Naive thymus-derived CD4-positive, alpha-beta T cell (primary cell): ENCODE measurements at regions of chr1 and their contacts with region 1.

Region 1: DNA sequence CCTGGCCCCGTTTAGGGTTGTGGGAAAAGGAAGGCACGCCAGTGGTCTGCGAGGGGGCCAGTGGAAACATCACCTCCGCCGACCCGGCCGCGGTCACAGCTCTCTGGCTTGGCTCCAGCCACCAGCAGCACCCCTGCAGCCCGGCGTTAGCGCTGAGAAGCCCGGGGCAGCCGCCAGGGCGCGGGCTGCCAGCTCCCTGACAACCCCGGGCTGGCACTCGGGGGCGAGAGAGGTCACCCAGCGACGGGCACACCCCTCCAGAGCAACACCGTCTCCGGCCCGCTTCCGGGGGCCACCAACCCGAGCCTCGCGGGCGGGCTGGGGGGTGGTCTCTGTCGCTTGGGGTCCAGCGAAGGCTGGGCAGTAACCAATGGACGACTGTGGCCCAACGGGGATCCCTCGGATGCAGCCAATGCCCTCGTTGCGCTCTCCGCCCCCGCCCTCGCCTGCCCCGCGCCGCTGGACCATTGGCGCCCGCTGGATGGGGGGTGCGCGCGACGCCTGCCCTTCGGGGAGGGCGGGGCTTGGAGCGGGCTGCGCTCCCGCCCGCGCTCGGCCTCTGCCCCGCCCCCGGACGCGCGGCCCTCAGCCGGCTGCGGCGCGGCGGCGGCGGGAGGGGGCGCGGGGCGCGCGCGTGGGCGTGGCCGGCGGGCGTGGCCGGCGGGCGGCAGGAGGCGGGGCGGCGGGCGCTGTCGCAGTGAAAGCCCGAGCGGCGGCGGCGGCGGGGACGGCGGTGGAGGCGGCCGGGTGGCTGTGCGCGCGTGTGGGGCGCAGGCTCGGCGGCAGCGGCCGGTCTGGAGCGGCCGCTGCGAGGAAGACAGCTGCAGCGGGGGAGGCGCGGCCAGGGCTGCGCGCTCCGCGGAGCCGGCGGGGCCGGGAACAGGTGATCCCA is at the start of gene MAN1C1:
- DNase-seq: peak; percentile 71 to 89 (median 85)
- ATAC-seq: peak; percentile 91
- H3K4me3 ChIP-seq: peak within 1 kb of the TSS; percentile 76
- H3K4me3 Mint-ChIP-seq: peak within 1 kb of the TSS; percentile 78 to 99 (median 86)
- H3K27ac ChIP-seq: peak within 1 kb of the TSS; percentile 84
- H3K27ac Mint-ChIP-seq: peak within 1 kb of the TSS; percentile 67 to 93 (median 86)
- H3K4me1 ChIP-seq: peaks cover 13 to 37% of the 10 kb centered on the region in 2 donors
- H3K4me1 Mint-ChIP-seq: peaks cover 36 to 52% (median 45%) of the 10 kb centered on the region in 7 donors
- H3K27me3 ChIP-seq: no peaks in the 10 kb centered on the region
- H3K27me3 Mint-ChIP-seq: peaks cover 0 to 72% (median 0%) of the 10 kb centered on the region in 5 donors
- total RNA-seq, gene MAN1C1: 28.8 to 85.5 (median 69.9) TPM

Region 2: DNA sequence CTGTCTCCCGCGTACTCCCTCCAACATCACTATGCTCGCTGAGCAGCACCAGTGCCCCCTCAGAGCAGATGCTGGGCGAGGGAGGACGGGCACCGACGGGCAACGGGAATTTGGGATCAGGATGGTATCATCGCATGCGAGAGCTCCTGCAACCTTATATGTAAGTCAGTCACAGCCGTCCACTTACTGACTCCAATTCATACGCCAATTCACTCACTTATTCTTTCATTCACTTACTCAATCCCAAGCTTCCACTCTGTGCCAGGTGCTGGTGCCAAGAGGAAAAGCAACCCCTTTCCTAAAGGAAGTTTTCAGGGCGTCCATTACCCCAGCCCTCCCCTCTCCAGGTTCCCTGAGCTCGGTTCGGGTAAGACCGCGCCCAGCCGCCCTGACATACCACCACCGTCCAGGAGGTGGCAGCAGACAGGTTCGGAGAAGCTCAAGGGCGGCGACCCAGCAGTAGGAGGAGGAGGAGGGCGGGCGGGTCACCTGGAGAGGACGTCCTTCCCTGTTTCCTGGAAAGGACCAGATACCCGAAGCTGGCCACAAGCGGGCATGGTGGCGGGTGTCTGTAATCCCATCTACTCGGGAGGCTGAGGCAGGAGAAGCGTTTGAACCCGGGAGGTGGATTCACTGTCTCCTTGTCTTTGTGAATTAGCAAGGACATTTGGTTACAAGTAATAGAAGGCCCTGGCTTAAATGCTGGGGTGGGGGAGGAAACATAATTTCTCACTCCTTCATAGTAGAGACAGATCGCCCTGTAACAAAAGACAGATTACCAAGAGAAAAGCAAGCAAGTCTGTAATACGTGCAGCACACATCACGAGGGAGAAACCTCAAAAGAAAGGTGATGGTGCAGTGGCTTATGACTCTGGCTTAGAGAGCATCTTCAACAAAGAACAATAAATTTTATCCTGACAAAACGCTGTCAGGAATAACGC is 1465.8 kb before region 1 on chr1:
- CTCF ChIA-PET with region 1: no interaction called
- POLR2A ChIA-PET with region 1: no interaction called
- intact Hi-C with region 1: no loop called
- DNase-seq: peak; percentile 56 to 89 (median 77)
- ATAC-seq: peak; percentile 96
- H3K4me3 ChIP-seq: peak overlapping the region; percentile 34
- H3K4me3 Mint-ChIP-seq: peak overlapping the region; percentile 32 to 82 (median 71)
- H3K27ac ChIP-seq: no peak overlapping the region
- H3K27ac Mint-ChIP-seq: peak overlapping the region in 2 of 9 donors; percentile 54 to 61
- H3K4me1 ChIP-seq: peaks cover 4 to 10% of the 10 kb centered on the region in 2 donors
- H3K4me1 Mint-ChIP-seq: peaks cover 9 to 18% (median 14%) of the 10 kb centered on the region in 7 donors
- H3K27me3 ChIP-seq: no peaks in the 10 kb centered on the region
- H3K27me3 Mint-ChIP-seq: peaks cover 27 to 51% (median 39%) of the 10 kb centered on the region in 5 donors

Region 3: DNA sequence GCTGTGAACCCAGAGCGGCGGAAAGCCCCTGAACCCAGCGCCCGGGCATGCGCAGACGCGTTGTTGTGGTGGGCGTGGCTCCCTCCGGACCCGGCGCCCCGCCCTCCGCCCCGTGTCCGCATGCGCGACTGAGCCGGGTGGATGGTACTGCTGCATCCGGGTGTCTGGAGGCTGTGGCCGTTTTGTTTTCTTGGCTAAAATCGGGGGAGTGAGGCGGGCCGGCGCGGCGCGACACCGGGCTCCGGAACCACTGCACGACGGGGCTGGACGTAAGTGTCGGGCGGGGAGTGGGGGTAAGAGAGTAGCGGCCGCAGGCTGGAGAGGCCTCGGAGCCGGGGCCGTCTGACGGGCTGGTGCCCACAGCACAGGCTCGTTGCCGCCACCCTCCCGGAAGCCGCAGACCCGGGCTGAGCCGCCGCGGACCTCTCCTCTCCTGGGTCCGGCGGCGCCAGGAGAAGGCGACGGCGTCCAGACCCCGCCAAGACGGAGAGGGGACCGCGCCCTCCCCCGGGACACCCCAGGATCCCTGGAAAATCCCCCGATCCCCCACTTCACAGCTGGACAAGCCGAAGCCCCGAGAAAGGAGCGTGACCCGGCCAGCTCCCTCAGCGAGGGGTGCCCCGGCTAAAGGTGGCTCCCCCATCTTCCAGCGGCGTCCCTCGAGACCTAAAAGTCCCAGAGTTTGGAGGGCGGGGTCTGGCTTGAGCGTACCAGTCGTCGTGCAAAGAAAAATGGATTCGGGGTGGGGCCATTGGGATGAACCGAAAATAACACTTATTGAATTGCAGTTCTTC is 278.0 kb before region 1 on chr1 and contains the start of gene TMEM50A:
- CTCF ChIA-PET with region 1: no interaction called
- POLR2A ChIA-PET with region 1: no interaction called
- intact Hi-C with region 1: no loop called
- DNase-seq: peak; percentile 87 to 99 (median 92)
- ATAC-seq: peak; percentile 90
- H3K4me3 ChIP-seq: peak within 1 kb of the TSS; percentile 94
- H3K4me3 Mint-ChIP-seq: peak within 1 kb of the TSS; percentile 93 to 97 (median 94)
- H3K27ac ChIP-seq: peak within 1 kb of the TSS; percentile 97
- H3K27ac Mint-ChIP-seq: peak within 1 kb of the TSS; percentile 80 to 96 (median 94)
- H3K4me1 ChIP-seq: peaks cover 20 to 22% of the 10 kb centered on the region in 2 donors
- H3K4me1 Mint-ChIP-seq: peaks cover 26 to 58% (median 45%) of the 10 kb centered on the region in 7 donors
- H3K27me3 ChIP-seq: no peaks in the 10 kb centered on the region
- H3K27me3 Mint-ChIP-seq: no peaks in the 10 kb centered on the region
- total RNA-seq, gene TMEM50A: 61.6 to 149 (median 79.0) TPM

Region 4: GRCh38 chr1:25430666-25431505 is 185.5 kb before region 1 on chr1 and contains the start of gene MACO1:
- CTCF ChIA-PET with region 1: no interaction called
- POLR2A ChIA-PET with region 1: interaction called, 3 read pairs
- intact Hi-C with region 1: loop called in 1 of 2 experiments (anchors 5 kb)
- DNase-seq: peak; percentile 93 to 99 (median 98)
- ATAC-seq: peak; percentile 91
- H3K4me3 ChIP-seq: peak within 1 kb of the TSS; percentile 100
- H3K4me3 Mint-ChIP-seq: peak within 1 kb of the TSS; percentile 93 to 99 (median 98)
- H3K27ac ChIP-seq: peak within 1 kb of the TSS; percentile 96
- H3K27ac Mint-ChIP-seq: peak within 1 kb of the TSS; percentile 96 to 100 (median 100)
- H3K4me1 ChIP-seq: peaks cover 30 to 33% of the 10 kb centered on the region in 2 donors
- H3K4me1 Mint-ChIP-seq: peaks cover 32 to 55% (median 48%) of the 10 kb centered on the region in 7 donors
- H3K27me3 ChIP-seq: no peaks in the 10 kb centered on the region
- H3K27me3 Mint-ChIP-seq: peaks cover 0 to 3% (median 0%) of the 10 kb centered on the region in 5 donors
- total RNA-seq, gene MACO1: 16.7 to 25.9 (median 22.0) TPM

Region 5: DNA sequence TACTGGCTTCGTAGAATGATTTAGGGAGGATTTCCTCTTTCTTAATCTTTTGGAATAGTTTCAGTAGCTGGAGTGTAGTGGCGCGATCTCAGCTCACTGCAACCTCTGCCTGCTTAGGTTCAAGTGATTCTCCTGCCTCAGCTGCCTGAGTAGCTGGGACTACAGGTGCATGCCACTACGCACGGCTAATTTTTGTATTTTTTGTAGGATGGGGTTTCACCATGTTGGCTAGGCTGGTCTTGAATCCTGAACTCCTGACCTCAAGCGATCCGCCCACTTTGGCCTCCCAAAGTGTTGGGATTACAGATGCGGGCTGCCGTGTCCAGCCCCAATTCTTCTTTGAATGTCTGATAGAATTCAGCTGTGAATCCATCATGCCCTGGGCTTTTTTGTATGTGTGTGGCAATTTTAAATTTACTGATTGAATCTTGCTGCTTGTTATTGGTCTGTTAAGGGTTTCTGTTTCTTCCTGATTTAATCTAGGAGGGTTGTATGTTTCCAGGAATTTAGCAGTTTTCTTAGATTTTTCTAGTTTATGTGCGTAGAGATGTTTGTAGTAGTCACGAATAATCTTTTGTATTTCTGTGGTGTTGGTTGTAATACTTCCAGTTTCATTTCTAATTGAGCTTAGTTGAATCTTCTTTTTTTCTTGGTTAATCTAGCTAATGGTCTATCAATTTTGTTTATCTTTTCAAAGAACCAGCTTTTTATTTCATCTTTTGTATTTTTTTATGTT is 15.6 kb after region 1 on chr1:
- CTCF ChIA-PET with region 1: interaction called, 17 read pairs
- POLR2A ChIA-PET with region 1: interaction called, 18 read pairs
- intact Hi-C with region 1: loop called (anchors 1 kb)
- DNase-seq: peak in 4 of 9 donors; percentile 3 to 35 (median 25)
- ATAC-seq: peak; percentile 44
- H3K4me3 ChIP-seq: peak overlapping the region; percentile 51
- H3K4me3 Mint-ChIP-seq: peak overlapping the region; percentile 63 to 96 (median 84)
- H3K27ac ChIP-seq: peak overlapping the region; percentile 86
- H3K27ac Mint-ChIP-seq: peak overlapping the region; percentile 79 to 100 (median 97)
- H3K4me1 ChIP-seq: peaks cover 6 to 48% of the 10 kb centered on the region in 2 donors
- H3K4me1 Mint-ChIP-seq: peaks cover 55 to 91% (median 82%) of the 10 kb centered on the region in 7 donors
- H3K27me3 ChIP-seq: no peaks in the 10 kb centered on the region
- H3K27me3 Mint-ChIP-seq: peaks cover 0 to 44% (median 0%) of the 10 kb centered on the region in 5 donors

Region 6: GRCh38 chr1:25664357-25665199 is 48.2 kb after region 1 on chr1:
- CTCF ChIA-PET with region 1: interaction called, 4 read pairs
- POLR2A ChIA-PET with region 1: interaction called, 81 read pairs
- intact Hi-C with region 1: no loop called
- DNase-seq: no peak
- ATAC-seq: no peak
- H3K4me3 ChIP-seq: no peak overlapping the region
- H3K4me3 Mint-ChIP-seq: no peak overlapping the region
- H3K27ac ChIP-seq: peak overlapping the region; percentile 39
- H3K27ac Mint-ChIP-seq: peak overlapping the region in 8 of 9 donors; percentile 43 to 98 (median 96)
- H3K4me1 ChIP-seq: peaks cover 0 to 41% of the 10 kb centered on the region in 2 donors
- H3K4me1 Mint-ChIP-seq: peaks cover 23 to 89% (median 85%) of the 10 kb centered on the region in 7 donors
- H3K27me3 ChIP-seq: no peaks in the 10 kb centered on the region
- H3K27me3 Mint-ChIP-seq: peaks cover 0 to 69% (median 0%) of the 10 kb centered on the region in 5 donors

Region 7: GRCh38 chr1:25695090-25695770 is 78.9 kb after region 1 on chr1:
- CTCF ChIA-PET with region 1: interaction called, 19 read pairs
- POLR2A ChIA-PET with region 1: interaction called, 12 read pairs
- intact Hi-C with region 1: loop called in 1 of 2 experiments (anchors 1 kb)
- DNase-seq: no peak
- ATAC-seq: no peak
- H3K4me3 ChIP-seq: no peak overlapping the region
- H3K4me3 Mint-ChIP-seq: peak overlapping the region in 6 of 10 donors; percentile 1 to 69 (median 38)
- H3K27ac ChIP-seq: no peak overlapping the region
- H3K27ac Mint-ChIP-seq: peak overlapping the region in 8 of 9 donors; percentile 65 to 89 (median 74)
- H3K4me1 ChIP-seq: peaks cover 0 to 63% of the 10 kb centered on the region in 2 donors
- H3K4me1 Mint-ChIP-seq: peaks cover 29 to 88% (median 70%) of the 10 kb centered on the region in 7 donors
- H3K27me3 ChIP-seq: no peaks in the 10 kb centered on the region
- H3K27me3 Mint-ChIP-seq: peaks cover 0 to 53% (median 0%) of the 10 kb centered on the region in 5 donors

Region 8: DNA sequence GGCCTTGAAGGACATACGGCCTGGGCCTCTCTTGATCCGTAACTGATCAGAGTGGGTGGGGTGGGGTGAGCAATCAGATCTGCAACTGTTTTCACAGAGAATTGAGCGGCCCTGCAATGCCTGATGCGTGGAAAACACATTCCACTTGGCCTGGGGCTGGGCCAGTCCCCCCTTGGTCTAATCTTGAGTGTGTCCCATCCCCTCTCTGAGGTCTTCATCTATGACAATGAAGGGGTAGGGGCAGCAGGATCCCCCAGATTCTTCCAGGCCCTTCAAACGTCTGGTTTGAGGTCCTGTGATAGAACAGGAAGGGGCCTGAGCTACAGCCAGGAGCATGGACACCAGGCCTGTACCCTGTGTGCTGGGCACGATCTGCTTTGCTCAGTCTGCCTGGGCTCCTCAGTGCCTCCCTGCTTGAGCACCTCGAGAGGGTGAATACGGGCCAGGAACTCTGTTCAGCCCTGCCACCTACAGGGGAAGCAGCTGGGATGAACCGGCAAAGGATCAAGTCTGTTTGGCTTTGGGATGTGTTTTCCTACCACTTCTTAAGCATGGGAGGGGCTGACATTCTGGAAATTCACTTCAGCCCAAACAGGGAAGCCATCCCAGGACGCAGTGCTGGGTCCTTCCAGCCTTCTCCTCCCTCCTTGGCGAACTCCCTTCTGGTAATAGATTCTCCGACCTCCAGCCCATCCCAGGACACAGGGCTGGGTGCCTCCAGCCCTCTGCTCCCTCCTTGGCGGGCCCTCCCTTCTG is 127.7 kb after region 1 on chr1:
- CTCF ChIA-PET with region 1: no interaction called
- POLR2A ChIA-PET with region 1: no interaction called
- intact Hi-C with region 1: no loop called
- DNase-seq: no peak
- ATAC-seq: no peak
- H3K4me3 ChIP-seq: no peak overlapping the region
- H3K4me3 Mint-ChIP-seq: no peak overlapping the region
- H3K27ac ChIP-seq: peak overlapping the region; percentile 30
- H3K27ac Mint-ChIP-seq: peak overlapping the region in 8 of 9 donors; percentile 30 to 90 (median 76)
- H3K4me1 ChIP-seq: peaks cover 0 to 16% of the 10 kb centered on the region in 2 donors
- H3K4me1 Mint-ChIP-seq: peaks cover 0 to 71% (median 57%) of the 10 kb centered on the region in 7 donors
- H3K27me3 ChIP-seq: no peaks in the 10 kb centered on the region
- H3K27me3 Mint-ChIP-seq: peaks cover 0 to 24% (median 0%) of the 10 kb centered on the region in 5 donors

Region 9: GRCh38 chr1:25796811-25797458 is 180.6 kb after region 1 on chr1:
- CTCF ChIA-PET with region 1: interaction called, 32 read pairs
- POLR2A ChIA-PET with region 1: interaction called, 31 read pairs
- intact Hi-C with region 1: loop called (anchors 1 to 2 kb)
- DNase-seq: peak; percentile 71 to 89 (median 86)
- ATAC-seq: peak; percentile 76
- H3K4me3 ChIP-seq: peak overlapping the region; percentile 15
- H3K4me3 Mint-ChIP-seq: peak overlapping the region; percentile 58 to 94 (median 81)
- H3K27ac ChIP-seq: peak overlapping the region; percentile 37
- H3K27ac Mint-ChIP-seq: peak overlapping the region; percentile 51 to 98 (median 93)
- H3K4me1 ChIP-seq: peaks cover 32 to 67% of the 10 kb centered on the region in 2 donors
- H3K4me1 Mint-ChIP-seq: peaks cover 30 to 88% (median 74%) of the 10 kb centered on the region in 7 donors
- H3K27me3 ChIP-seq: no peaks in the 10 kb centered on the region
- H3K27me3 Mint-ChIP-seq: peaks cover 0 to 29% (median 0%) of the 10 kb centered on the region in 5 donors

Region 10: DNA sequence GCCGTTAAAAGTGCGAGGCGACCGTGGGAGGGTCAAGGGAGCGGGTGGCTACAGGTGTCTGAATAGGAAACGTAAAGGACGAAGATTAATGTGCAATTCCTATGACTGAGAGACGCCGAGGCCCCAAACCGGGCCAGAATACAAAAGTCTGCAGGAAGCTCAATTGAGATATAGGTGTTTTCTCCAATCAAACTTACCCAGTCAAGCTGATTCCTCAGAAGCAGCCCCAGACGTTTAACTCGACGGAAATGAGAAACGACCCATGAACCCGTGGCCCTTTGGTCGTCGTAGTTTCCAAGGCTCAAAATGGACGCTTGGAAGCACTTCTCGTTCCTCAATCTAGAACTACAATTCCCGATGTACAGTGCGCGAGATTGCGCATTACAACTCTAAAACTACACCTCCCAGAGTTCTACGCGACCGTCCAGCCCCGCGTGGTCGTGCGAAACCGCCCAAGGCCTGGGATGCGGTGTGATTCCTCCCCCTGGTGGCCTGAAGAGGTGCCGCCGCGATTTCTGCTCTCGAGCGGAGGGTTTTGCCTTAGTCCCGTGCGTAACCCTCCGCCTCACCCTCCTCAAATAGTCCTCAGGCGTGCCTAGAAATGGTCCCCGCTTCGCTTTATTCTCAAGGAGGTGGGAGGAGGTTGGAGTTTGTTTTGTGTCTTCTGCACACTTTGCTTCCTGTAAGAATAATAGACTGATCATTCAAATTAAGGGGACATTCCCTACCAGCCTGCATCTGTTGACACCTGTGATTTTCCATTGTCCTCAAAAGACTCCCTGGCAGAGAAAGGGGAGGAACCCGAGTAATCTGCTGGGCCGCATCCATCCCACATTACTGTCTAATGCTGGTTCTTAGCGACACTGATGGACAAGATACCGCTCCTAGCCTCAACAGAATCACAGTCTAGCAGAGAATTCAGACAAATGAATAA is 381.8 kb after region 1 on chr1 and contains the start of gene PAFAH2:
- CTCF ChIA-PET with region 1: interaction called, 5 read pairs
- POLR2A ChIA-PET with region 1: no interaction called
- intact Hi-C with region 1: loop called in 1 of 2 experiments (anchors 5 kb)
- DNase-seq: peak; percentile 83 to 99 (median 98)
- ATAC-seq: peak; percentile 98
- H3K4me3 ChIP-seq: peak within 1 kb of the TSS; percentile 76
- H3K4me3 Mint-ChIP-seq: peak within 1 kb of the TSS; percentile 91 to 99 (median 96)
- H3K27ac ChIP-seq: peak within 1 kb of the TSS; percentile 89
- H3K27ac Mint-ChIP-seq: peak within 1 kb of the TSS; percentile 96 to 99 (median 99)
- H3K4me1 ChIP-seq: peaks cover 8 to 18% of the 10 kb centered on the region in 2 donors
- H3K4me1 Mint-ChIP-seq: peaks cover 19 to 50% (median 40%) of the 10 kb centered on the region in 7 donors
- H3K27me3 ChIP-seq: no peaks in the 10 kb centered on the region
- H3K27me3 Mint-ChIP-seq: no peaks in the 10 kb centered on the region
- total RNA-seq, gene PAFAH2: 11.4 to 36.0 (median 12.7) TPM

Region 11: GRCh38 chr1:26064591-26064990 is 448.2 kb after region 1 on chr1:
- CTCF ChIA-PET with region 1: no interaction called
- POLR2A ChIA-PET with region 1: no interaction called
- intact Hi-C with region 1: no loop called
- DNase-seq: no peak
- ATAC-seq: no peak
- H3K4me3 ChIP-seq: no peak overlapping the region
- H3K4me3 Mint-ChIP-seq: no peak overlapping the region
- H3K27ac ChIP-seq: no peak overlapping the region
- H3K27ac Mint-ChIP-seq: no peak overlapping the region
- H3K4me1 ChIP-seq: no peaks in the 10 kb centered on the region
- H3K4me1 Mint-ChIP-seq: no peaks in the 10 kb centered on the region
- H3K27me3 ChIP-seq: no peaks in the 10 kb centered on the region
- H3K27me3 Mint-ChIP-seq: peaks cover 2 to 39% (median 13%) of the 10 kb centered on the region in 5 donors